HCT116 (cell line): ENCODE measurements at regions of chr12 and their contacts with region 1.

Region 1: GRCh38 chr12:22821985-22822384 is 197.0 kb downstream of the ETNK1 start:
- DNase-seq: no peak
- ATAC-seq: no peak
- H3K4me3 ChIP-seq: no peak overlapping the region
- H3K27ac ChIP-seq: no peak overlapping the region
- H3K4me1 ChIP-seq: no peaks in the 10 kb centered on the region
- H3K27me3 ChIP-seq: no peaks in the 10 kb centered on the region
- CTCF ChIP-seq: no peak
- POLR2A ChIP-seq: no peak
- RAD21 ChIP-seq: no peak

Region 2: DNA sequence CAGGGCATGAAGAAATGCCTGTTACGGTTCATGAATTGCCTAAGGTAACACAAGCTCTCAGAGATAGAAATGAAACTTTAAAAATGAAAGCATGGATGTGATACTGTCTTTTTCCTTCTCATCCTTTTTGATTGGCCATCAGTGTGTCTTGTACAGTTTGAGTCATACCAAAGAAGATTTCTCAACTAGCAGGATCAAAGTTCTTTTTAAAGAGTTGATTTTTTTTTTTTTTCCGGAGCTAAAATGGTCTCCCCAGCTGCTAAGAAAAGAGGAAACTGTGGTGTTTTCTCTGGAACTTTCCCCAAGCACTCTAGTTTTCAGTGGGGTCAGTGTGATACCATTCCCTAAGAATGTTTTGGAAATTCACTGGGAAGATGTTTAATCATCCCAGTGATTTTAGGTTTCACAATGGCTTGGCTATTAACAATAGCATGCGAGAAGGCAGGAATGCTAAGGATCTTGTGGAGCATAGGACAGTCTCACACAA is 92.0 kb before region 1 on chr12:
- CTCF ChIA-PET with region 1: no interaction called
- POLR2A ChIA-PET with region 1: no interaction called
- RAD21 ChIA-PET with region 1: no interaction called
- intact Hi-C with region 1: no loop called
- DNase-seq: no peak
- ATAC-seq: no peak
- H3K4me3 ChIP-seq: no peak overlapping the region
- H3K27ac ChIP-seq: no peak overlapping the region
- H3K4me1 ChIP-seq: no peaks in the 10 kb centered on the region
- H3K27me3 ChIP-seq: no peaks in the 10 kb centered on the region
- CTCF ChIP-seq: no peak
- POLR2A ChIP-seq: no peak
- RAD21 ChIP-seq: no peak

Region 3: DNA sequence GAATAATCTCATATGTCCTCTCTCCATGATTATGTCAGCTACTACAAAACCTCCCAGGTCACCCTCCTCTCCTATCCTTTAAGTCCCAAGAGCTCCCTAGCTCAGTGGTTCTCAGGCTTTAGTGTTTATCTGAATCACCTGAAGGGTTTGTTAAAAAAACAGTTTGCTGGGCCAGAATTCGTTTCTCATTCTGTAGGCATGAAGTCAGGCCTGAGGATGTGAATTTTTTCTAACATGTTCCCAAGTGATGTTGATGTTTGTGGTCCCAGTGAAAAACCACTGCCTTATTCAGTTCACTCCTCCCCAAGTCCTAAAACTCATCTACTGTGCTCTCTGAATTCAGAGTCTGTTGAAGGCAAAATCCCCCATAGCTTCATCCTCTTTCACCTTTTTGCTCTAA is 44.4 kb after region 1 on chr12:
- CTCF ChIA-PET with region 1: no interaction called
- POLR2A ChIA-PET with region 1: no interaction called
- RAD21 ChIA-PET with region 1: no interaction called
- intact Hi-C with region 1: loop called (anchors 5 kb)
- DNase-seq: no peak
- ATAC-seq: no peak
- H3K4me3 ChIP-seq: no peak overlapping the region
- H3K27ac ChIP-seq: no peak overlapping the region
- H3K4me1 ChIP-seq: no peaks in the 10 kb centered on the region
- H3K27me3 ChIP-seq: 0 out of 2 replicates have a peak, but pooled peaks cover 3% of the 10 kb centered on the region
- CTCF ChIP-seq: no peak
- POLR2A ChIP-seq: no peak
- RAD21 ChIP-seq: no peak

Region 4: DNA sequence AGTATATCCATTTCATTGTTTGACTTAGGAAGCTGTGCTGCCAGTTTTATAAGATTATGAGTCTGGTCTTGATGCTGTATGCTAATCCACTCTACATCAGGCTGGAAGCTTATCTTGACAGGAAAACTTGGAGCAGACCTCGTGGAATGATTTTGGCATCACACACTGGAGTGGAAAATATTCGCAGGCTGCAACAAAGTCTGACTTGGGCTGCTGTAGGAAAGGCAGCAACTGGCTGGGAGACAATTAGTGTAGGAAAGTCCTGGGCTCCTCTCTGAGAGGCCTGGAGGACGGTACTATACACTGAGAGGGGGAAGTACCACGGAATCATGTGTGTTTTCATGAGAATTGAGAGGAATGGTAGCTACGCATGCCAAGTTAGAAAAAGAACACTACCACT is 186.6 kb after region 1 on chr12:
- CTCF ChIA-PET with region 1: no interaction called
- POLR2A ChIA-PET with region 1: no interaction called
- RAD21 ChIA-PET with region 1: no interaction called
- intact Hi-C with region 1: no loop called
- DNase-seq: no peak
- ATAC-seq: no peak
- H3K4me3 ChIP-seq: no peak overlapping the region
- H3K27ac ChIP-seq: no peak overlapping the region
- H3K4me1 ChIP-seq: no peaks in the 10 kb centered on the region
- H3K27me3 ChIP-seq: no peaks in the 10 kb centered on the region
- CTCF ChIP-seq: no peak
- POLR2A ChIP-seq: no peak
- RAD21 ChIP-seq: no peak